Caco-2 (cell line): ENCODE measurements at regions of chr1 and their contacts with region 1.

Region 1: DNA sequence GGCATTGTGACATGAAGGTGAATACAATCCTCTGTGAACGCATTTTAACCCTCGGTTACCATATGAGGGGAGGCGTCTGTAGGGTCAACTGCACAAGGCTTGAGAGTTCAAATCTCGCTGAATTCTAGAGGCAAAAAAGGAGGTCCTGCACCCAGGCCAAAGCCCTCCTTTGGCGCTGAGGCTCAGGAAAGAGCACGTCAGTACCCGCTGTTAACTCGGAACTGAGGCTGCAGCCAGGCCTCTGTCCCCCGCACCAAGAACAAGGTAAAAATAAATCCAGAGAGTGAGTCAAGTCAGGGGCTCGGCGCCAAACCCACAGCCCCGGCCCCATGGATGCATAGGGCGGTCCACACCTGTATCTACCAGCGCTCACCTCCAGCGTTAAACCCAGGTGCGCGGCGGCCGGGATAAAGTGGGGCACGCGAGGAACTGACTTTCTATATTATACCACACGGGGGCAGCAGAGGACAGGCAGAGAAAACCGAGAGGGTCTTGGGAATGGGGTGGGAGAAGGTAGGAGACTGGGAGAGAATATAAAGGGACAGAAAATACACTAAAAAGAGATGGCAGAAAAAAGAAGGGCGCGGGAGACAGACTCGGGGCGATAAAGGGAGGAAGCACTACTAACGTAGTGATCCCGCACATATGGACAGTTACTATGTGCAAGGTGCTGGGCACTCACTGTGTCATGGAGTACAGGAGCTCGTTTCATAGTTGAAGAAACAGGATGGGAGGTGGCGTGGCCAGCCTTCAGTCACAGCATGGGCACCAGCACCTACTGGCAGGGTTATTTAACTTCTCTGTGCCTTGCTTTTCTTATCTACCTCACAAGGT is 54.8 kb downstream of the DMRTA2 start:
- DNase-seq: peak in 1 of 2 experiments; percentile 62
- H3K4me3 ChIP-seq: no peak overlapping the region
- H3K4me3 Mint-ChIP-seq: no peak overlapping the region
- H3K27ac Mint-ChIP-seq: no peak overlapping the region
- H3K4me1 ChIP-seq: no peaks in the 10 kb centered on the region
- H3K4me1 Mint-ChIP-seq: no peaks in the 10 kb centered on the region
- H3K27me3 ChIP-seq: no peaks in the 10 kb centered on the region
- H3K27me3 Mint-ChIP-seq: peaks cover 13% of the 10 kb centered on the region
- CTCF ChIP-seq: peak; percentile 57 to 90

Region 2: DNA sequence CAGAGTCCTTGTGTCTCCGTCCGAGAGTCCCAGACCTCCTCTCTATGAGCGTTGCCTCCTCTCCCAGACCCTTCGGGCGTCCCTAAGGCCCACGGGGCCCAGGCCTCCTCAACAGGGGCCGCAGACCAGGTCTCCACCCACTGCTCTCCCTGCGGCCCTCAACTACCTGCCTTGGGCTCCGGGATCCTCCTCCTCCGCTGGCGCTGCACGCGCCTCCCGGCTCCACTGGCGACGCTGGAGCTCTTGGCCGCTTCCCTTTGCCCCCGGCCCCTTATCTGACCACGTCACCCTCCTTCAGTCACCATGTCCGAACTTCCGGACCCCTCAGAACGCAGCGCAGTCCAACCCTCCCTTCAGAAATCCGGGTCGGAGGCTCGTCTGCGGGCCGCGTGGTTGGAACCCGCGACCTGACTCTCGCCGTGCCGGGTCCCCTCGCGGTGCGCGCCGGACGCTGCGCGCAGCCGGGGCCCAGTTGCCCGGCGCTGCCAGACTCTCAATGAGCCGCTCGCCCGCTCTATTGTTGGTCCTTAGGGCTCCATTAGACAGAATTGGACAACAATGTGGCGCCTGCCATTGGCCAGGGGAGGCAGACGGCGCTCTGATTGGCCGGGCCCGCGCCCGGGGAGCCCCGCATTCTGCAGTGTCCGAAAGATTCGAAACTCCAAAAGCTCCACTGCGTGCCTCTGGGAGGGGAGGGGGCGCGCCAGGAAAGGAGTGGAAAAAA is 54.7 kb after region 1 on chr1 and contains the start of gene DMRTA2:
- CTCF ChIA-PET with region 1: no interaction called
- POLR2A ChIA-PET with region 1: no interaction called
- intact Hi-C with region 1: loop called (anchors 2 kb)
- DNase-seq: peak; percentile 71 to 74
- H3K4me3 ChIP-seq: peak within 1 kb of the TSS; percentile 53
- H3K4me3 Mint-ChIP-seq: peak within 1 kb of the TSS; percentile 72
- H3K27ac Mint-ChIP-seq: peak within 1 kb of the TSS; percentile 91
- H3K4me1 ChIP-seq: no peaks in the 10 kb centered on the region
- H3K4me1 Mint-ChIP-seq: peaks cover 6% of the 10 kb centered on the region
- H3K27me3 ChIP-seq: peaks cover 3% of the 10 kb centered on the region; the same call in 1 of the 2 replicates
- H3K27me3 Mint-ChIP-seq: peaks cover 21% of the 10 kb centered on the region
- CTCF ChIP-seq: no peak
- total RNA-seq, gene DMRTA2: 3.1 and 3.4 TPM in 2 replicates

Region 3: GRCh38 chr1:51058858-51059257 is 690.5 kb after region 1 on chr1:
- CTCF ChIA-PET with region 1: no interaction called
- POLR2A ChIA-PET with region 1: no interaction called
- intact Hi-C with region 1: loop called (anchors 5 kb)
- DNase-seq: peak in 1 of 2 experiments; percentile 10
- H3K4me3 ChIP-seq: no peak overlapping the region
- H3K4me3 Mint-ChIP-seq: no peak overlapping the region
- H3K27ac Mint-ChIP-seq: no peak overlapping the region
- H3K4me1 ChIP-seq: peaks cover 10% of the 10 kb centered on the region; the same call in 1 of the 2 replicates
- H3K4me1 Mint-ChIP-seq: peaks cover 9% of the 10 kb centered on the region
- H3K27me3 ChIP-seq: no peaks in the 10 kb centered on the region
- H3K27me3 Mint-ChIP-seq: peaks cover 6% of the 10 kb centered on the region
- CTCF ChIP-seq: peak in 1 of 2 experiments; percentile 51